AG04450 (cell line): ENCODE measurements at regions of chr1 and their contacts with region 1.

Region 1: DNA sequence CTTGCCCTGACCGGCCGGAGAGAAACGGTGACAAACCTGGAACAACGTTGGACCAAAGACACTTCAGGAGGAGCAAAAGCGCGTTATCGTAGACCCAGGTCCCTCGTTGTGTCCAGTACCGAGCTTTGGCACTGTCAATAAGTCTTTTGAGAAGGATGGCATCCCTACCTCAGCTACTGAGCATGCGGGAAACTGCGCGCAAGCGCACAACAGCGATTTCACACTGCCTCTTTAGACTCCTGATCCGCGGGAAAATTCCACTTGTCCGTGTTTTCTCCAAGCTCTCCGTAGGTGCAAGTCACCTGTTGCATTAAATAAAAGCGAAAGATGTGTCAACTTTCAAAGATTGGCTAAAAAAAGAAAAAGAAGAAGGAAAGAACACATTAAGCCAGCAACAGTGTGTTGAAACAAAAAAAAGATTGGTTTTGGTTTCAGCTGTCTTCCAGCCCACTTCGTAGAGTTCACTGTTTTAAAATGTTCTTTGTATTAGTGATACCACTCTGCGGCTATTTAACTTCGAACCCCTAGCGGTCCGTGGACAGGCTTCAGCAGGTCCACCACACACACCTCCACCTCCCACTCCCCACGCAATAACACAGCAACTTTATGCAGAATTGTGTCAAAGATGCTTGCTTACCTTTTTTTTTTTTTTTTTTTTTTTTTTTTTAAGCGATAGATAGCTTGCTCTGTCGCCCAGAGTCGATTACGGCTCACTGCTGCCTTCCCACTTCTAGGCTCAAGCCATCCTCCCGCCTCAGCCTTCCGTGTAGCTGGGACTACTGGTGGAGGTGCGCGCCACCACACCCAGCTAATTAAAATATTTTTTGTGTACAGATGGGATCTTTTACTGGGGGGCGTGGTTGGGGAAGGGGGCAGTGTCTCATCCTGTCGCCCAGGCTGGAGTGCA is at the start of gene BPNT1:
- DNase-seq: peak; percentile 87
- H3K4me3 ChIP-seq: peak within 1 kb of the TSS; percentile 74
- H3K27ac ChIP-seq: no peak within 1 kb of the TSS
- H3K27me3 ChIP-seq: no peaks in the 10 kb centered on the region
- CTCF ChIP-seq: no peak
- polyA plus RNA-seq, gene BPNT1: 46.6 and 54.1 TPM in 2 replicates

Region 2: GRCh38 chr1:219149953-219150352 is 940.0 kb before region 1 on chr1:
- CTCF ChIA-PET with region 1: interaction called, 10 read pairs
- POLR2A ChIA-PET with region 1: no interaction called
- DNase-seq: no peak
- H3K4me3 ChIP-seq: no peak overlapping the region
- H3K27ac ChIP-seq: no peak overlapping the region
- H3K27me3 ChIP-seq: no peaks in the 10 kb centered on the region
- CTCF ChIP-seq: no peak

Region 3: GRCh38 chr1:220182656-220183055 is 92.8 kb after region 1 on chr1:
- CTCF ChIA-PET with region 1: no interaction called
- POLR2A ChIA-PET with region 1: interaction called, 11 read pairs
- DNase-seq: no peak
- H3K4me3 ChIP-seq: no peak overlapping the region
- H3K27ac ChIP-seq: no peak overlapping the region
- H3K27me3 ChIP-seq: no peaks in the 10 kb centered on the region
- CTCF ChIP-seq: no peak